CD8-positive, alpha-beta T cell (primary cell): ENCODE measurements at regions of chr2 and their contacts with region 1.

Region 1: DNA sequence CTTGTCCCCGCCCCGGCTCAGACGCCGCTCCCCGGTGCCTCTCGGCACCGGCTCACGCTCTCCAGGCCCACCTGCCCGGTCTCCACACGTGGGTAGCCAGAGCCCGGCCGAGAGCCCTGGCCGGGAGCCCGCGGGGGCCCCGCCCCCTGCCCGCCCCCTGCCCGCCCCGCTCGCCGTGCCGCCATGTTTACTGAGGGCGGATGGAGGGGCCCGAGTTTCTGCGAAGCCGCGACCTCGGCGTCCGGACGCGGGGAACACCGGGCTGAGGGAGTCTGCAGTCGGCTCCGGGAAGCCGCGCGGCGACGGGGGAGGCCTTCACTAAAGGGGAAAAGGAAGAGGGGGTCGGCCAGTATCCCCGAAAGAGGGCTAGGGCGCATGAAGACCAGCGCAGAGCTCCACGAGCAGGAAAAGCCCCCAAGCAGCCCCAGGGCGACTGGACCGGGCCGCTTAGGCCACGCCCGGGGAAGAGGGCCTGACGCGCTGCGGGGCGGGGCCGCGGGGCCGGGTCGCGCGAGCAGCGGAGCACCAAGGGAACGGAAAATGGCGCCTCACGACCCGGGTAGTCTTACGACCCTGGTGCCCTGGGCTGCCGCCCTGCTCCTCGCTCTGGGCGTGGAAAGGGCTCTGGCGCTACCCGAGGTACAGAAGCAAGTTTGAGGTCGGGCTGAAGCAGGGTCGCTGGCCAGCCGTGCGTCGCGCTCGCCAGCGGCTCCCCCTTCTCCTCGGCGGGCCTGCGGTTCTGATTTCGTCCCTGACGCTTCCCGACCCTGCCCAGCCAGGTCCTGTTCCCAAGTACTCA is at the starts of genes ATRAID and SLC5A6:
- DNase-seq: peak; percentile 78 to 94 (median 87)
- ATAC-seq: peak; percentile 84
- H3K4me3 ChIP-seq: peak within 1 kb of the TSS; percentile 67 to 99
- H3K4me3 Mint-ChIP-seq: peak within 1 kb of the TSS; percentile 100
- H3K27ac ChIP-seq: peak within 1 kb of the TSS; percentile 97 to 100
- H3K27ac Mint-ChIP-seq: peak within 1 kb of the TSS; percentile 100
- H3K4me1 ChIP-seq: peaks cover 26% of the 10 kb centered on the region
- H3K4me1 Mint-ChIP-seq: peaks cover 44% of the 10 kb centered on the region
- H3K27me3 ChIP-seq: no peaks in the 10 kb centered on the region
- H3K27me3 Mint-ChIP-seq: no peaks in the 10 kb centered on the region
- CTCF ChIP-seq: no peak
- total RNA-seq, gene ATRAID: 70.0 to 71.7 TPM
- total RNA-seq, gene SLC5A6: 410 to 431 TPM

Region 2: GRCh38 chr2:27079233-27080139 is 132.5 kb before region 1 on chr2:
- CTCF ChIA-PET with region 1: no interaction called
- POLR2A ChIA-PET with region 1: no interaction called
- intact Hi-C with region 1: loop called (anchors 1 kb)
- DNase-seq: no peak
- ATAC-seq: no peak
- H3K4me3 ChIP-seq: no peak overlapping the region
- H3K4me3 Mint-ChIP-seq: no peak overlapping the region
- H3K27ac ChIP-seq: no peak overlapping the region
- H3K27ac Mint-ChIP-seq: no peak overlapping the region
- H3K4me1 ChIP-seq: peaks cover 37% of the 10 kb centered on the region
- H3K4me1 Mint-ChIP-seq: peaks cover 34% of the 10 kb centered on the region
- H3K27me3 ChIP-seq: no peaks in the 10 kb centered on the region
- H3K27me3 Mint-ChIP-seq: no peaks in the 10 kb centered on the region
- CTCF ChIP-seq: no peak

Region 3: DNA sequence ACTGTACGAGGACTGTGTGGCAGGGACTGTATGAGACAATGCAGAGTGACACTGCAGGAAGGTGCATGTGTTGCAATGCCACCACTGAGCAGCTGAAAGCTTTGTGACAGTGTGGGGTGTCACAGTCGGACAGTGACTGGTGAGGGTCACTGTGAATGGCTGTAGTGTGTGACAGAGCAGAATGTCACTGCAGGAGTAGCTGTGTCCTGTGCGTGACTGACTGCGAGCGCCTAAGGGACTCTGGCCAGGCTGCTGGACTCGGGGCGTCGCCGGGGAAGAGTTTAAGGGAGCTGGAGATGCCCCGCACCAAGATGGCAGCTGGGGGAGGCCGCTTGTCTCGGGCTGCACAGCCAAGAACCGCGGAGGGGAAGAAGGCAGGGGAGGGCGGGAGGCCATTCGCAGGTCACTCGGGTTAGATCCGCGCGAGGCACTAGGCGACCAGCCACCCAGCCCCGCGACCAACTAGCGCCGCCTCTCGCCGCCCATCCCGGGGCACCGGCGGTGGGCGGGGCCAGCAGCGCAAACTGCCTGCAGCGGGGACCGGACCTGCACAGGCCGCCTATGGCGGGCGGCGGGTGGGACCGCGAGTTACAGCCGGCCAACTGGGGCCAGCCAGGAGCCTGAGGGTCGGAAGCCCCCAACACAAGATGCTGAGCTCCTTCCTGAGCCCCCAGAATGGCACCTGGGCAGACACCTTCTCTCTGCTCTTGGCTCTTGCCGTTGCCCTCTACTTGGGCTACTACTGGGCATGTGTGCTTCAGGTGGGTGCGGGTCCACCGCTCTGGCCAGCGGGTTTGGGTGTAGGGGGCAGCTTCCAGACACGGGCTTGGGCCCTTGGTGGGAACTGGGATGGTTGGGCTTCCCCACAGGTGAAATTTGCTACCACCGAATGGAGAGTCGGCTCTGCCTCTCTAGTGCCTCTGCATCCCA is 88.5 kb before region 1 on chr2 and contains the start of gene ABHD1:
- CTCF ChIA-PET with region 1: no interaction called
- POLR2A ChIA-PET with region 1: interaction called, 3 read pairs
- intact Hi-C with region 1: loop called in 1 of 2 experiments (anchors 1 kb)
- DNase-seq: peak; percentile 19 to 82 (median 68)
- ATAC-seq: peak; percentile 83
- H3K4me3 ChIP-seq: peak within 1 kb of the TSS; percentile 41 to 68
- H3K4me3 Mint-ChIP-seq: peak within 1 kb of the TSS; percentile 92
- H3K27ac ChIP-seq: peak within 1 kb of the TSS in 1 of 2 experiments; percentile 62
- H3K27ac Mint-ChIP-seq: peak within 1 kb of the TSS; percentile 81
- H3K4me1 ChIP-seq: peaks cover 14% of the 10 kb centered on the region
- H3K4me1 Mint-ChIP-seq: peaks cover 22% of the 10 kb centered on the region
- H3K27me3 ChIP-seq: peaks cover under 1 to 4% of the 10 kb centered on the region in 2 experiments
- H3K27me3 Mint-ChIP-seq: peaks cover 13% of the 10 kb centered on the region
- CTCF ChIP-seq: no peak
- total RNA-seq, gene ABHD1: 0.67 to 1.0 TPM

Region 4: DNA sequence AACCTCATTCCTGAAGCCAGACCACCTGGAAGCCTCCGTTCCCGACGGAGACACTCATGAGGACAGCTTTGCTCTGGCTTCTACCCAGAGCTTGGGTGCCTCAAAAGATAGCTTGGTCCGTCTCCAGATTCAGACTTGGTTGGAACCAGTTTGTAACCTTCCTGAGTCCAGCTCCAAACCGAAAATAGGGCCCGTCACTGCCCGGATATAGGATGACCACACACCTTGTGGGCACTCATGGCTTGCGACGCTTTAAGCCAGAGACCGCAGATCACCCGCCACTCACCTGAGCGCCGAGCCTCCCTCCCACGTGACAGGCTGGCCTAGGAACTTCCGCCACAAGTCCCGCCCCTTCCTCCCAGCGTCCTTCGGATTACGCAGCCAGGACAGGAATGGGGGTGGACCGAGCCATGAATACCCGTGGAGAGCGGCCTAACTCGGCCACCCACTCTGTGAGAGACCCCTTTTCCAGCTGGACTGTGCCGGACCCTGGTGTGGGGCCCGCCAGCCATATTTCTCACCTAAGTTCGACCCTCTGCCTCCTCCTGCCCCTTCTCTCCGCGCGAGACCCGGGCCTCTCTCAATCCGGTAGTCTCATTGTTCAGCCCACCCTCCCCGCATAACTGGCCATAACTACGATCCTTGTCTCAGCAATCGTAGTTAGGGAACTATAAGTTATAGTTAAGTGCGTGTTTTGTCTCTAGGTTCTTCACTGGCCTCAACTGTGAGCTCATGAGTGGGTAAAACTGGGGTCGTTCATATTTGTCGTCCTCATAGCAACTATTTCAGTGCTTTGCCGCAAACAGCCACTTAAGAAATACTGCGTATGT is 111.0 kb after region 1 on chr2 and contains the start of gene MPV17:
- CTCF ChIA-PET with region 1: no interaction called
- POLR2A ChIA-PET with region 1: no interaction called
- intact Hi-C with region 1: loop called (anchors 2 to 5 kb)
- DNase-seq: peak; percentile 65 to 93 (median 87)
- ATAC-seq: peak; percentile 96
- H3K4me3 ChIP-seq: peak within 1 kb of the TSS; percentile 80 to 81
- H3K4me3 Mint-ChIP-seq: peak within 1 kb of the TSS; percentile 99
- H3K27ac ChIP-seq: peak within 1 kb of the TSS; percentile 89 to 94
- H3K27ac Mint-ChIP-seq: peak within 1 kb of the TSS; percentile 99
- H3K4me1 ChIP-seq: peaks cover 9% of the 10 kb centered on the region
- H3K4me1 Mint-ChIP-seq: peaks cover 25% of the 10 kb centered on the region
- H3K27me3 ChIP-seq: no peaks in the 10 kb centered on the region
- H3K27me3 Mint-ChIP-seq: no peaks in the 10 kb centered on the region
- CTCF ChIP-seq: no peak
- total RNA-seq, gene MPV17: 23.6 to 26.0 TPM